HepG2 (cell line): ENCODE measurements at regions of chr10 and their contacts with region 1.

Region 1: DNA sequence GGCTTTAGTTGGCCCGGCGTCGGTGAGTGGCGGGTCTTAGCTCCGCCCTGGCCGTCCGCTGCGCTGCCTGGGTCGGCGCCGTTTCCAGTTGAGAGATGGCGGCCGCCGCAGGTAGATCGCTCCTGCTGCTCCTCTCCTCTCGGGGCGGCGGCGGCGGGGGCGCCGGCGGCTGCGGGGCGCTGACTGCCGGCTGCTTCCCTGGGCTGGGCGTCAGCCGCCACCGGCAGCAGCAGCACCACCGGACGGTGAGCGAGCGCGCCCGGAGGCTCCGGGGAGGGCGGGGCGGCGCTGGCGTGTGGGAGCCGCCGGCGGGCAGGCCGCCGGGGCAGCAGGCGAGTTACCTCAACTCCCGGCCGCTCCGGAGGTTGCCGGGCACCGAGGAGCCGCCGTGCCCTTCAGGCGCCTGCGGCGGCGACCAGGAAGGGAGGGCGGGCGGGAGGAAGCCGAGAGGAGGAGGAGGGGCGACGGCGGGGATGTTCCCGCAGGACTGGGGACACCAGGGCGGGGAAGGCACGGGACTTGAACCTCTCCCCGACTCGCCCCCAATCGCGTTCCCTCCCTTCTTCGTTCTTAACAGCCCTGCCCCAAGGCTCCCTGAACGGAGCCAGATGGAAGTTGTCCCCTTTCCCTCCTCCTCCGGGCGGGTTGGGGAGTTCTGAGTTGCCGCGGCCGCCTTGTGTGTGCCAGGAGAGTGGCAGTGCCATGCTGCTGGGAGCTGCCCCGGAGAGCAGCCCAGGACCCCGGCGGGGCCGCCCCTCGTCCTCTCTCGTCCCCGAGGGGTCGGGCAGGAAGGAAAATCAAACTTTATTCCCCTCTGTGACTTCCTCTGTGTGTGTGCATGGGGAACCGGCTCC is at the start of gene MCU:
- DNase-seq: no peak
- ATAC-seq: peak; percentile 98
- H3K4me3 ChIP-seq: peak within 1 kb of the TSS; percentile 81 to 97 (median 96)
- H3K27ac ChIP-seq: peak within 1 kb of the TSS; percentile 52
- H3K4me1 ChIP-seq: peaks cover 58% of the 10 kb centered on the region
- H3K27me3 ChIP-seq: no peaks in the 10 kb centered on the region; a peak in 1 of 5 replicates
- CTCF ChIP-seq: no peak
- EP300 ChIP-seq: no peak
- POLR2A ChIP-seq: peak; percentile 44 to 85
- RAD21 ChIP-seq: peak; percentile 64; the same call in 1 of the 2 replicates
- total RNA-seq, gene MCU: 25.9 and 28.7 TPM in 2 replicates

Region 2: GRCh38 chr10:72364239-72364777 is 328.0 kb before region 1 on chr10:
- CTCF ChIA-PET with region 1: no interaction called
- POLR2A ChIA-PET with region 1: no interaction called
- in situ Hi-C with region 1: loop called (anchors 5 kb)
- intact Hi-C with region 1: no loop called
- DNase-seq: peak; percentile 68
- ATAC-seq: peak; percentile 83
- H3K4me3 ChIP-seq: no peak overlapping the region
- H3K27ac ChIP-seq: no peak overlapping the region
- H3K4me1 ChIP-seq: peaks cover 10% of the 10 kb centered on the region
- H3K27me3 ChIP-seq: no peaks in the 10 kb centered on the region
- CTCF ChIP-seq: peak; percentile 94
- EP300 ChIP-seq: no peak
- POLR2A ChIP-seq: no peak
- RAD21 ChIP-seq: peak; percentile 81

Region 3: GRCh38 chr10:72679838-72680241 is 12.4 kb before region 1 on chr10:
- CTCF ChIA-PET with region 1: no interaction called
- POLR2A ChIA-PET with region 1: interaction called, 25 read pairs
- in situ Hi-C with region 1: no loop called
- intact Hi-C with region 1: no loop called
- DNase-seq: peak; percentile 89
- ATAC-seq: peak; percentile 95
- H3K4me3 ChIP-seq: peak overlapping the region; percentile 23 to 50 (median 42); a peak in 5 of 6 replicates
- H3K27ac ChIP-seq: peak overlapping the region; percentile 53
- H3K4me1 ChIP-seq: peaks cover 29% of the 10 kb centered on the region
- H3K27me3 ChIP-seq: no peaks in the 10 kb centered on the region
- CTCF ChIP-seq: no peak
- EP300 ChIP-seq: no peak
- POLR2A ChIP-seq: no peak
- RAD21 ChIP-seq: no peak

Region 4: GRCh38 chr10:72834183-72834825 is 142.0 kb after region 1 on chr10:
- CTCF ChIA-PET with region 1: interaction called, 8 read pairs
- POLR2A ChIA-PET with region 1: no interaction called
- in situ Hi-C with region 1: loop called (anchors 5 kb)
- intact Hi-C with region 1: loop called (anchors 1 kb)
- DNase-seq: peak; percentile 53
- ATAC-seq: peak; percentile 44; the same call in 1 of the 3 replicates
- H3K4me3 ChIP-seq: no peak overlapping the region
- H3K27ac ChIP-seq: no peak overlapping the region
- H3K4me1 ChIP-seq: 0 out of 2 replicates have a peak, but pooled peaks cover 4% of the 10 kb centered on the region
- H3K27me3 ChIP-seq: no peaks in the 10 kb centered on the region
- CTCF ChIP-seq: peak; percentile 72
- EP300 ChIP-seq: no peak
- POLR2A ChIP-seq: no peak
- RAD21 ChIP-seq: peak; percentile 58; the same call in 1 of the 2 replicates

Region 5: GRCh38 chr10:72875250-72876055 is 183.2 kb after region 1 on chr10:
- CTCF ChIA-PET with region 1: no interaction called
- POLR2A ChIA-PET with region 1: no interaction called
- in situ Hi-C with region 1: no loop called
- intact Hi-C with region 1: loop called (anchors 5 kb)
- DNase-seq: peak; percentile 18
- ATAC-seq: 0 out of 3 replicates have a peak, but pooled peaks have one; percentile 28
- H3K4me3 ChIP-seq: no peak overlapping the region
- H3K27ac ChIP-seq: no peak overlapping the region
- H3K4me1 ChIP-seq: no peaks in the 10 kb centered on the region
- H3K27me3 ChIP-seq: no peaks in the 10 kb centered on the region
- CTCF ChIP-seq: peak; percentile 59
- EP300 ChIP-seq: no peak
- POLR2A ChIP-seq: no peak
- RAD21 ChIP-seq: no peak